CD4-positive, alpha-beta T cell (primary cell): ENCODE measurements at regions of chr3 and their contacts with region 1.

Region 1: DNA sequence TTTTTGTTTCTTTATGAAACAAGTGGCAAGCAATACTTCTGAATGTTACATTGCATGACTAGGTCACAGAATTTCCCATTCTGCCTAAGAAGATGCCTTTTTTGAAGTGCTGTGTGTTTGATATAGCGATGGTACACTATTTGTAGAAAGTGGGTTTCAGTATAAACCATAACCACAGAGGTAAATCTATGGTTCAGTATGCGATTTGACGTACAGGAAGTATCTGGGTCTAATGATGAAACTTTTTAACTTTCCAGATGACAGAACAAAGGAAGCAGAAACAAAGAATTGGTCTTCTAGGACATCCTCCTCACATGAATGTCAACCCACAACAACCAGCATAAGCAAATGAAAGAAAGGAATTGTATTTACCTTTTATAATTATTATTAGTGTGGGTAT is 133.4 kb upstream of the BHLHE40 start:
- DNase-seq: peak in 3 of 14 experiments; percentile 77 to 85 (median 83)
- ATAC-seq: peak; percentile 83
- H3K4me3 ChIP-seq: no peak overlapping the region
- H3K4me3 Mint-ChIP-seq: peak overlapping the region; percentile 14
- H3K27ac ChIP-seq: peak overlapping the region in 1 of 2 donors; percentile 18
- H3K27ac Mint-ChIP-seq: peak overlapping the region; percentile 83
- H3K4me1 ChIP-seq: peaks cover 52% of the 10 kb centered on the region
- H3K4me1 Mint-ChIP-seq: peaks cover 91% of the 10 kb centered on the region
- H3K27me3 ChIP-seq: no peaks in the 10 kb centered on the region
- H3K27me3 Mint-ChIP-seq: no peaks in the 10 kb centered on the region
- CTCF ChIP-seq: no peak

Region 2: GRCh38 chr3:4834403-4834866 is 11.4 kb before region 1 on chr3:
- CTCF ChIA-PET with region 1: interaction called, 6 read pairs
- POLR2A ChIA-PET with region 1: interaction called, 11 read pairs
- intact Hi-C with region 1: loop called (anchors 1 to 2 kb)
- DNase-seq: peak; percentile 49 to 91 (median 60)
- ATAC-seq: peak; percentile 35
- H3K4me3 ChIP-seq: no peak overlapping the region
- H3K4me3 Mint-ChIP-seq: peak overlapping the region; percentile 55
- H3K27ac ChIP-seq: peak overlapping the region; percentile 19 to 24
- H3K27ac Mint-ChIP-seq: peak overlapping the region; percentile 92
- H3K4me1 ChIP-seq: peaks cover 75% of the 10 kb centered on the region
- H3K4me1 Mint-ChIP-seq: peaks cover 76% of the 10 kb centered on the region
- H3K27me3 ChIP-seq: no peaks in the 10 kb centered on the region
- H3K27me3 Mint-ChIP-seq: no peaks in the 10 kb centered on the region
- CTCF ChIP-seq: no peak

Region 3: GRCh38 chr3:4888913-4889846 is 43.3 kb after region 1 on chr3:
- CTCF ChIA-PET with region 1: no interaction called
- POLR2A ChIA-PET with region 1: no interaction called
- intact Hi-C with region 1: loop called in 1 of 2 experiments (anchors 5 kb)
- DNase-seq: peak in 5 of 14 experiments; percentile 13 to 73 (median 68)
- ATAC-seq: peak; percentile 66
- H3K4me3 ChIP-seq: no peak overlapping the region
- H3K4me3 Mint-ChIP-seq: no peak overlapping the region
- H3K27ac ChIP-seq: no peak overlapping the region
- H3K27ac Mint-ChIP-seq: peak overlapping the region; percentile 39
- H3K4me1 ChIP-seq: peaks cover 19% of the 10 kb centered on the region
- H3K4me1 Mint-ChIP-seq: peaks cover 16% of the 10 kb centered on the region
- H3K27me3 ChIP-seq: no peaks in the 10 kb centered on the region
- H3K27me3 Mint-ChIP-seq: no peaks in the 10 kb centered on the region
- CTCF ChIP-seq: no peak